ENCODE measurements at regions of chr2 and their contacts with region 1.

Region 1: GRCh38 chr2:37389989-37390765 is 45.7 kb downstream of the QPCT start:
- DNase-seq: peak; percentile 83
- CTCF ChIP-seq: no peak

Region 2: GRCh38 chr2:37376421-37377186 is 13.6 kb before region 1 on chr2:
- CTCF ChIA-PET with region 1: interaction called, 59 read pairs
- POLR2A ChIA-PET with region 1: no interaction called
- DNase-seq: peak; percentile 59
- CTCF ChIP-seq: no peak

Region 3: DNA sequence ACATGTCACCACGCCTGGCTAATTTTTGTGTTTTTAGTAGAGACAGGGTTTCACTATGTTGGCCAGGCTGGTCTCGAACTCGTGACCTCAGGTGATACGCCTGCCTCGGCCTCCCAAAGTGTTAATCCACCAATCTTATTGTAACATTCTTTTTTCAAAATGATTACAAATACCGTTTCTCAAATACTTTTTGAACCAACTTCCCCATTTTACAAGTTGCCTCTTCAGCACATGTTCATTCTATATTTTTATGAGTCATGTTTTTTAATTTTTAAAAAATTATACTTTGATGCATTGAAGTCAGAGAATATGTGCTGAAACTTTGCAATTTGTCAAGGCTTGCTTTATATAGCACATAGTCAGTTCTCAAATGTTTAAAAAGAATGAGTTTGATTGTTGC is 12.5 kb after region 1 on chr2:
- CTCF ChIA-PET with region 1: interaction called, 23 read pairs
- POLR2A ChIA-PET with region 1: no interaction called
- DNase-seq: no peak
- CTCF ChIP-seq: no peak

Region 4: GRCh38 chr2:37427241-37427640 is 37.1 kb after region 1 on chr2:
- CTCF ChIA-PET with region 1: no interaction called
- POLR2A ChIA-PET with region 1: no interaction called
- DNase-seq: no peak
- CTCF ChIP-seq: no peak

Region 5: GRCh38 chr2:37851828-37852584 is 461.8 kb after region 1 on chr2:
- CTCF ChIA-PET with region 1: interaction called, 13 read pairs
- POLR2A ChIA-PET with region 1: no interaction called
- DNase-seq: peak; percentile 66
- CTCF ChIP-seq: no peak

Region 6: GRCh38 chr2:37890893-37891495 is 500.8 kb after region 1 on chr2:
- CTCF ChIA-PET with region 1: interaction called, 30 read pairs
- POLR2A ChIA-PET with region 1: no interaction called
- DNase-seq: peak; percentile 68
- CTCF ChIP-seq: peak; percentile 76

Measured in GM10248 (cell line).